ENCODE measurements at regions of chr7 and their contacts with region 1.

Region 1: GRCh38 chr7:97179454-97180104 is 62.1 kb downstream of the SDHAF3 start:
- DNase-seq: peak; percentile 54
- H3K4me3 Mint-ChIP-seq: no peak overlapping the region
- H3K27ac Mint-ChIP-seq: no peak overlapping the region
- H3K4me1 Mint-ChIP-seq: peaks cover 3% of the 10 kb centered on the region
- H3K27me3 Mint-ChIP-seq: no peaks in the 10 kb centered on the region

Region 2: GRCh38 chr7:97104719-97105238 is 74.8 kb before region 1 on chr7:
- CTCF ChIA-PET with region 1: interaction called, 22 read pairs
- POLR2A ChIA-PET with region 1: no interaction called
- intact Hi-C with region 1: loop called (anchors 1 kb)
- DNase-seq: peak; percentile 80
- H3K4me3 Mint-ChIP-seq: no peak overlapping the region
- H3K27ac Mint-ChIP-seq: no peak overlapping the region
- H3K4me1 Mint-ChIP-seq: no peaks in the 10 kb centered on the region
- H3K27me3 Mint-ChIP-seq: peaks cover 12% of the 10 kb centered on the region

Region 3: GRCh38 chr7:97145068-97145467 is 34.5 kb before region 1 on chr7:
- CTCF ChIA-PET with region 1: interaction called, 10 read pairs
- POLR2A ChIA-PET with region 1: no interaction called
- intact Hi-C with region 1: loop called (anchors 1 kb)
- DNase-seq: no peak
- H3K4me3 Mint-ChIP-seq: no peak overlapping the region
- H3K27ac Mint-ChIP-seq: no peak overlapping the region
- H3K4me1 Mint-ChIP-seq: no peaks in the 10 kb centered on the region
- H3K27me3 Mint-ChIP-seq: no peaks in the 10 kb centered on the region

Measured in activated CD4-positive, alpha-beta memory T cell treated with anti-CD3 and anti-CD28 coated beads for 36 hours (primary cell).